ENCODE measurements at regions of chr12 and their contacts with region 1.

Region 1: DNA sequence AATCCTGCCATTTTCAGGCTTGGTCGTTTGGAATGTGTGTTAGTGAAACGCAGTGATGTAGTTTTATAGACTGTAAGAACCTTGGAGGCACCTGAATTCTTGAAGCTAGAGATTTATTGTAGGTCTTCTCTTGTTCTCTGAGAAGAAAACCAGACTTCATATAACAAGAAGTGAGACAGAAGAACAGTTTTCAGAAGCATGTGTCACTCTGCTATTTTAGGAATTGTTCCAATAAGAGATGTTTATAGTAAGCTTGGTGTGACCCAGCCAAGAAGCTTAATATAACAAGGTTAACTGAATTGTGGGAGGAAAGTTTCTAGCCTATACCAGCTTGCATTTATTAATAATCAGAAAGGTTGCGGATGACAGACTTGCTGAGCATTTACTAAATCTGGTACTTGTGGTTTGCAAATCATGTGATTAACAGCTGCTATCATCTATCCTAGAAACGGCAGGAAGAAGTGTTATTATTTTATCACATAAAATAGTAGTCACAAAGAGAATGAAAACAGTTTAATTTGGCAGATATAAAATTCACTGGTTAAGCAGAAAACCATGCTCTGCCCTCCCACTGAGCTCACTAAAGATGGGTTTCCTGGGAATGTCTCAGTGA is 49.2 kb upstream of the BCAT1 start:
- DNase-seq: no peak
- H3K4me3 Mint-ChIP-seq: no peak overlapping the region
- H3K27ac Mint-ChIP-seq: peak overlapping the region; percentile 21
- H3K4me1 Mint-ChIP-seq: peaks cover 27% of the 10 kb centered on the region
- H3K27me3 Mint-ChIP-seq: no peaks in the 10 kb centered on the region

Region 2: GRCh38 chr12:24530689-24531088 is 467.4 kb before region 1 on chr12:
- CTCF ChIA-PET with region 1: no interaction called
- POLR2A ChIA-PET with region 1: no interaction called
- intact Hi-C with region 1: no loop called
- DNase-seq: no peak
- H3K4me3 Mint-ChIP-seq: no peak overlapping the region
- H3K27ac Mint-ChIP-seq: no peak overlapping the region
- H3K4me1 Mint-ChIP-seq: no peaks in the 10 kb centered on the region
- H3K27me3 Mint-ChIP-seq: no peaks in the 10 kb centered on the region

Region 3: DNA sequence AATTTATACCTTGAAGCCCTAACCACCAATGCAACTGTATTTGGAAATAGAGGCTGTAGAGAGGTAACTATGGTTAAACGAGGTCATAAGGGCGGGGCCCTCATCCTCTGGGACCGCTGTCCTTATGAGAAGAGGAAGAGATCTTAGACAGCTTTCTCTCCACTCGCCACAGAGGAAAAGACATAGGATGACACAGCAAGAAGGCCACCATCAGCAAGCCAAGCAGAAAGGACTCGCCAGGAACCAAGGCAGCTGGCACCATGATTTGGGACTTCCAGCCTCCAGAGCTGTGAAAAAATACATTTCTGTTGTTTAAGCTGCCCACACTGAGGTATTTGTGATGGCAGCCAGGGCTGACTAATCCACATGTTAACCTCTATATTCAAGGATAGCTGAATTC is 18.7 kb before region 1 on chr12:
- CTCF ChIA-PET with region 1: no interaction called
- POLR2A ChIA-PET with region 1: no interaction called
- intact Hi-C with region 1: no loop called
- DNase-seq: no peak
- H3K4me3 Mint-ChIP-seq: no peak overlapping the region
- H3K27ac Mint-ChIP-seq: no peak overlapping the region
- H3K4me1 Mint-ChIP-seq: no peaks in the 10 kb centered on the region
- H3K27me3 Mint-ChIP-seq: peaks cover 6% of the 10 kb centered on the region

Region 4: GRCh38 chr12:25130741-25131188 is 132.7 kb after region 1 on chr12:
- CTCF ChIA-PET with region 1: interaction called, 120 read pairs
- POLR2A ChIA-PET with region 1: no interaction called
- intact Hi-C with region 1: no loop called
- DNase-seq: no peak
- H3K4me3 Mint-ChIP-seq: no peak overlapping the region
- H3K27ac Mint-ChIP-seq: no peak overlapping the region
- H3K4me1 Mint-ChIP-seq: no peaks in the 10 kb centered on the region
- H3K27me3 Mint-ChIP-seq: no peaks in the 10 kb centered on the region

Region 5: GRCh38 chr12:25151476-25151875 is 153.4 kb after region 1 on chr12:
- CTCF ChIA-PET with region 1: interaction called, 48 read pairs
- POLR2A ChIA-PET with region 1: no interaction called
- intact Hi-C with region 1: no loop called
- DNase-seq: no peak
- H3K4me3 Mint-ChIP-seq: no peak overlapping the region
- H3K27ac Mint-ChIP-seq: no peak overlapping the region
- H3K4me1 Mint-ChIP-seq: peaks cover 8% of the 10 kb centered on the region
- H3K27me3 Mint-ChIP-seq: no peaks in the 10 kb centered on the region

Region 6: GRCh38 chr12:25286837-25287236 is 288.8 kb after region 1 on chr12:
- CTCF ChIA-PET with region 1: no interaction called
- POLR2A ChIA-PET with region 1: no interaction called
- intact Hi-C with region 1: no loop called
- DNase-seq: no peak
- H3K4me3 Mint-ChIP-seq: no peak overlapping the region
- H3K27ac Mint-ChIP-seq: no peak overlapping the region
- H3K4me1 Mint-ChIP-seq: peaks cover 8% of the 10 kb centered on the region
- H3K27me3 Mint-ChIP-seq: peaks cover 2% of the 10 kb centered on the region

Region 7: DNA sequence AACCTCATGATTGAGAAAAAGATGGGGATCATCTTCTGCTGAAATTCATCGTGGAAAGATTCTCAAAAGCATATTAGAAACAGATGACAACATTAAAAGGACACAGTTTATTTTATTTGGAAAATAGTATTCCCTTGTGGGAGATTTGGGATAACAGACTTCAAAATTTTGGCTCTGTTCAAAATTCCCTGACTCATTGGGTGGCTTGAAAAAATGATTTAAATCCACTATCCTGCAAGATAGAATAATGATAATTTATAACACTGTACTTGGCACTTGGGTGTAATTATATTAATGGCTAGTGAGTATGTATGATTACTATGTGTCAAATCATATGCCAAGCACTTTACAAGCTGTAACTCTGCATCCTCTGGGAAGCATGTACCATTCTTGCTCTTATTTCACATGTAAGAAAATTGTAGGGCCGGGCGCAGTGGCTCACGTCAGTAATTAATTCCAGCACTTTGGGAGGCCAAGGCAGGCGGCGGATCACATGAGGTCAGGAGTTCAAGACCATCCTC is 426.2 kb after region 1 on chr12:
- CTCF ChIA-PET with region 1: no interaction called
- POLR2A ChIA-PET with region 1: no interaction called
- intact Hi-C with region 1: no loop called
- DNase-seq: no peak
- H3K4me3 Mint-ChIP-seq: no peak overlapping the region
- H3K27ac Mint-ChIP-seq: no peak overlapping the region
- H3K4me1 Mint-ChIP-seq: no peaks in the 10 kb centered on the region
- H3K27me3 Mint-ChIP-seq: no peaks in the 10 kb centered on the region

Measured in activated CD4-positive, alpha-beta memory T cell treated with anti-CD3 and anti-CD28 coated beads for 36 hours (primary cell).